PC-9 (cell line): ENCODE measurements at regions of chr19 and their contacts with region 1.

Region 1: GRCh38 chr19:48271531-48272151 is 1.8 kb downstream of the ZNF114 start:
- DNase-seq: peak; percentile 66 to 75
- H3K4me3 ChIP-seq: peak overlapping the region; percentile 79
- H3K27ac ChIP-seq: peak overlapping the region; percentile 99
- H3K4me1 ChIP-seq: peaks cover 25% of the 10 kb centered on the region
- H3K27me3 ChIP-seq: no peaks in the 10 kb centered on the region
- CTCF ChIP-seq: no peak

Region 2: GRCh38 chr19:48094129-48094854 is 177.3 kb before region 1 on chr19:
- CTCF ChIA-PET with region 1: no interaction called
- POLR2A ChIA-PET with region 1: no interaction called
- intact Hi-C with region 1: no loop called
- DNase-seq: no peak
- H3K4me3 ChIP-seq: no peak overlapping the region
- H3K27ac ChIP-seq: no peak overlapping the region
- H3K4me1 ChIP-seq: peaks cover 9% of the 10 kb centered on the region; the same call in 1 of the 2 replicates
- H3K27me3 ChIP-seq: peaks cover 42% of the 10 kb centered on the region
- CTCF ChIP-seq: no peak

Region 3: GRCh38 chr19:48290771-48291488 is 19.3 kb after region 1 on chr19:
- CTCF ChIA-PET with region 1: interaction called, 7 read pairs
- POLR2A ChIA-PET with region 1: interaction called, 33 read pairs
- intact Hi-C with region 1: loop called (anchors 1 kb)
- DNase-seq: peak; percentile 65 to 82
- H3K4me3 ChIP-seq: peak overlapping the region; percentile 70
- H3K27ac ChIP-seq: no peak overlapping the region
- H3K4me1 ChIP-seq: peaks cover 13% of the 10 kb centered on the region
- H3K27me3 ChIP-seq: no peaks in the 10 kb centered on the region
- CTCF ChIP-seq: peak; percentile 99

Region 4: GRCh38 chr19:48363810-48364563 is 92.3 kb after region 1 on chr19 and contains the starts of genes SYNGR4 and TMEM143:
- CTCF ChIA-PET with region 1: interaction called, 4 read pairs
- POLR2A ChIA-PET with region 1: interaction called, 28 read pairs
- intact Hi-C with region 1: no loop called
- DNase-seq: peak; percentile 99 to 100
- H3K4me3 ChIP-seq: peak within 1 kb of the TSS; percentile 72
- H3K27ac ChIP-seq: peak within 1 kb of the TSS; percentile 63
- H3K4me1 ChIP-seq: peaks cover 7% of the 10 kb centered on the region
- H3K27me3 ChIP-seq: no peaks in the 10 kb centered on the region
- CTCF ChIP-seq: no peak
- total RNA-seq, gene SYNGR4: 1.3 and 2.1 TPM in 2 replicates
- total RNA-seq, gene TMEM143: 24.8 and 31.3 TPM in 2 replicates

Region 5: GRCh38 chr19:48568345-48568886 is 296.8 kb after region 1 on chr19:
- CTCF ChIA-PET with region 1: no interaction called
- POLR2A ChIA-PET with region 1: no interaction called
- intact Hi-C with region 1: no loop called
- DNase-seq: peak; percentile 83
- H3K4me3 ChIP-seq: peak overlapping the region; percentile 32; the same call in 1 of the 2 replicates
- H3K27ac ChIP-seq: peak overlapping the region; percentile 40
- H3K4me1 ChIP-seq: peaks cover 29% of the 10 kb centered on the region
- H3K27me3 ChIP-seq: no peaks in the 10 kb centered on the region
- CTCF ChIP-seq: no peak

Region 6: DNA sequence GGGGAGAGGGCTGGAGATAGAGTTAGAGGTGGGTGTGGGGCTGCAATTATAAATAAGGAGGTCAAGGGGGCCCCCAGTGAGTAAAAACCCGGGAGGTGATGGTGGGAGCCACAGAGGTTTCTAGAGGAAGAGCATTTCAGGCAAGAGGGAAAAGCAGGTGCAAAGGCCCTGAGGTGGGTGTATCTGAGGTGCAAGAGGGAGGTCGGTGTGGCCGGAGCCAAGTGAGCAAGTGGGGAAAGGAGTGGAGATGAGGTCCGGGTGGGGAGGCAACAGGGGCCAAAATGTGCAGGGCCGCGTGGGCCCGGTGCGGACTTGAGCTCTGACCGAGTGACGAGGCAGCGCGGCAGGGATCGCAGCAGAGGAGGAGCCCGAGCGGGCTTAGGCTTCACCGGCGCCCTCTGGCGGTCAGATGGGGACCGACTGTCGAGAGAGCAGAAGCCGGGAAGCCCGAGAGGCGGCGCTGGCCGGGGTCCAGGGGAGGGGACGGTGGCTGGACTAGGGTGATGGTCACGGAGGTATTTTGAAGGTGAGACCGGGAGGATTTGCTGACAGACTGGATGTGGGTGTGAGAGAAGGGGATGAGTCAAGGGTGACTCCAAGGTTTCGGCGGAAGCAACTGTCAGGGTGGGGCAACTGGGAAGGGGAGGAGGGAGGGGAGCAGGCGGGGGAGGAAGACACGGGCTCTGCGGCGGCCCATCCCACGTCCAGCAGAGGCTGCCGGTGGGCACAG is 317.2 kb after region 1 on chr19:
- CTCF ChIA-PET with region 1: no interaction called
- POLR2A ChIA-PET with region 1: no interaction called
- intact Hi-C with region 1: loop called (anchors 1 kb)
- DNase-seq: peak; percentile 93 to 96
- H3K4me3 ChIP-seq: peak overlapping the region; percentile 43; the same call in 1 of the 2 replicates
- H3K27ac ChIP-seq: peak overlapping the region; percentile 73
- H3K4me1 ChIP-seq: peaks cover 14% of the 10 kb centered on the region
- H3K27me3 ChIP-seq: no peaks in the 10 kb centered on the region
- CTCF ChIP-seq: peak; percentile 94

Region 7: GRCh38 chr19:49165111-49165750 is 893.6 kb after region 1 on chr19:
- CTCF ChIA-PET with region 1: no interaction called
- POLR2A ChIA-PET with region 1: interaction called, 32 read pairs
- intact Hi-C with region 1: no loop called
- DNase-seq: peak; percentile 49 to 81
- H3K4me3 ChIP-seq: no peak overlapping the region
- H3K27ac ChIP-seq: peak overlapping the region; percentile 17; the same call in 1 of the 2 replicates
- H3K4me1 ChIP-seq: peaks cover 13% of the 10 kb centered on the region
- H3K27me3 ChIP-seq: no peaks in the 10 kb centered on the region
- CTCF ChIP-seq: no peak